Panc1 (cell line): ENCODE measurements at regions of chr3 and their contacts with region 1.

Region 1: GRCh38 chr3:63818281-63819150 is 583 bp upstream of the C3orf49 start:
- DNase-seq: peak; percentile 54
- ATAC-seq: no peak
- H3K4me3 ChIP-seq: no peak overlapping the region
- H3K27ac ChIP-seq: no peak overlapping the region
- H3K4me1 ChIP-seq: no peaks in the 10 kb centered on the region
- H3K27me3 ChIP-seq: no peaks in the 10 kb centered on the region
- CTCF ChIP-seq: peak; percentile 76

Region 2: GRCh38 chr3:63351236-63351716 is 467.2 kb before region 1 on chr3:
- CTCF ChIA-PET with region 1: interaction called, 13 read pairs
- POLR2A ChIA-PET with region 1: no interaction called
- in situ Hi-C with region 1: no loop called
- intact Hi-C with region 1: loop called (anchors 1 kb)
- DNase-seq: peak; percentile 51
- ATAC-seq: peak; percentile 75; the same call in 1 of the 2 replicates
- H3K4me3 ChIP-seq: no peak overlapping the region
- H3K27ac ChIP-seq: no peak overlapping the region
- H3K4me1 ChIP-seq: no peaks in the 10 kb centered on the region
- H3K27me3 ChIP-seq: no peaks in the 10 kb centered on the region
- CTCF ChIP-seq: peak; percentile 73

Region 3: GRCh38 chr3:63841704-63842103 is 23.2 kb after region 1 on chr3:
- CTCF ChIA-PET with region 1: no interaction called
- POLR2A ChIA-PET with region 1: no interaction called
- in situ Hi-C with region 1: no loop called
- intact Hi-C with region 1: no loop called
- DNase-seq: no peak
- ATAC-seq: no peak
- H3K4me3 ChIP-seq: no peak overlapping the region
- H3K27ac ChIP-seq: no peak overlapping the region
- H3K4me1 ChIP-seq: no peaks in the 10 kb centered on the region
- H3K27me3 ChIP-seq: no peaks in the 10 kb centered on the region
- CTCF ChIP-seq: no peak